ENCODE measurements at regions of chr6 and their contacts with region 1.

Region 1: GRCh38 chr6:118709859-118710350 is 58.5 kb upstream of the CEP85L start:
- DNase-seq: no peak
- ATAC-seq: peak; percentile 35 to 58

Region 2: GRCh38 chr6:118651282-118652050 is 58.4 kb before region 1 on chr6 and contains the start of gene CEP85L:
- intact Hi-C with region 1: loop called in 1 of 2 experiments (anchors 10 kb)
- DNase-seq: peak; percentile 95
- ATAC-seq: peak; percentile 98 to 99
- total RNA-seq, gene CEP85L: 8.5 TPM

Region 3: DNA sequence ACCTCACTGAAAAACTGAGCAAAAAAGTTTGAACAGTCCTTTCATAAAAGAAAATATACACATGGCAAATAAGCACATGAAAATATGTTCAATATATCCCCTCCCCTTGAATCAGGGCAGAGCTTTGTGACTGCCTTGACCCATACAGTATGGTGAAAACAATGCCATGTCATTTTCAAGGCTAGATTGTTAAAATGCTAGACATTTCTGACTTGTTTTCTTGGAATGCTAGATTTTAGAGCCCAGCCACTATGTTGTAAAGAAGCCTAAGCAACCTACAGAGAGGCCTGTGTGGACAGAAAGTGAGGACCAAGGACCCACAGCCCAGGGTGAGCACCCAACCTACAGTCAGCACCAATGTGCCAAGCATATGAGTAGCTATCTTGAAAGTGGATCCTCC is 166.9 kb after region 1 on chr6:
- intact Hi-C with region 1: no loop called
- DNase-seq: no peak
- ATAC-seq: no peak

Measured in left cardiac atrium (tissue), 4 donors.